Right ventricle myocardium inferior (tissue), 1 donor: ENCODE measurements at regions of chr1 and their contacts with region 1.

Region 1: DNA sequence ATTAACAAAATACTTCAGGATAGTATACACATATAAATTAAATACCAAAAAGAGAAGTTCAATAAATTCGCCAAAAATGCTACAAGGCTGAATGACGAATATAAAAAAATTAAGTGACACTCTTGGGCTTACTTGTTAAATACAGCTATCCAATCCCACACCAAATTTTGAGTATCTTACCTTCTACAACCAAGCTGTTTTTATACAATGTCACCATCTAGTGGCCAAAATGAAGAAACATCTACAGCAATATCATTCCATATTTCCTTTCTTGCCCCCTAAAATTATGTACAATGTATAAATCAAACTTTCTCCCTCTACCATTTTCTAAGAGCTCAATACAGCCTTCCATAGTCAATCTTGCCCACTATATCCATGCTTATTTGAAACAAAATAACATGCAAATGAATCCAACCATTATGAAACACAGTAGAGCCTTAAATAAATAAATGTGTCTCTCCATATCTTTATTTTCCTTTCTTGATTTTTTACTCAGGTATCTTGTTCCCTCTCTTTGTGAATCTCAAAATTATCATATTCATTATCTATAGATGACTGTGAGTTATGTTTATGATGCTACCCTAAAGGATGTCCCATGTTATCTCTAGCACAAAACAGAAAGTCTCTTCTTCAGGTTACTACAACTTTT is 86.3 kb downstream of the ACBD6 start:
- DNase-seq: no peak
- ATAC-seq: no peak

Region 2: GRCh38 chr1:180188091-180188506 is 228.0 kb before region 1 on chr1:
- intact Hi-C with region 1: loop called (anchors 5 kb)
- DNase-seq: no peak
- ATAC-seq: no peak

Region 3: DNA sequence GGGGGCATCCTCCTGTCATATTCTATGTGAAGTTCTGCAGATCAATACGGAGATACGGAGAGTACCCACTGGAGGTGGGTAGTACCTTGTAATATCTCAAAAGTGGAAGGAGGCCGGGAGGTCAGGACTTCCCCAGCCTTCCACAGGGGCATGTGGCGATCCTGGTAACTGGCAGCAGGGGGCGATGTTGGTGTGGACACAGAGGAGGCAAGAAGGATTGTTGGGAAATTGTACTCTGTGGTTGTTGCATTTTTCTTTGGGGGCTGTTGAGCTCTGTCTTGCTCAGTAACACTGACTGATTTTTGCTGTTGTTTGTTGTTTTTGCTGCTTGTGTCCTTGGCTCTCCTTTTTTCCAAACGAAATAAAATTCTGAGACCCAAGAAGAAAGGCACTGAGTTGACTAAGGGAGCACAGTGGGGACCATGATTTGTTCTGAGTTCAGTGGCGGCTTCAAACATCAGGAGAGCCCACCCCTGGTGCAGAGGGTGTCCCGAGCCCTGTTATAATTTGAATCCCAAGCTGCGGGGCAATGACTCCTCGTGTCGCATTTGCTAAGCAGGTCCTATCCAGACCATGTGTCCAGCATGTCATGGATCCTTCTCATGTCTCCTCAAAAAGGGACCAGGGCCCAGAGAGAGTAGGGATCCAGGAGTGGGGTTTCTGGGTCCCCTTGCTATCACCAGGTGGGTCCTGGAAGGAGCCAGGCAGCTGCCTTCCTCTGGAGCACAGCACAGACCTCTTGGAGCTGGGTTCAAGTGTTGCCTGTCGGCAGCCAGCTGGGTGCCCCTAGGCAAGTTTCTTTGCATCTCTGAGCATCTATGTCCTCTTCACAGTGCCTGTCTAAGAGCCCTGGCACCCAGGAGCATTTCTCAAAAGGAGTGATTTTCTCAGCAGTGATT is 163.2 kb before region 1 on chr1:
- intact Hi-C with region 1: loop called (anchors 2 kb)
- DNase-seq: peak; percentile 90
- ATAC-seq: peak; percentile 51

Region 4: DNA sequence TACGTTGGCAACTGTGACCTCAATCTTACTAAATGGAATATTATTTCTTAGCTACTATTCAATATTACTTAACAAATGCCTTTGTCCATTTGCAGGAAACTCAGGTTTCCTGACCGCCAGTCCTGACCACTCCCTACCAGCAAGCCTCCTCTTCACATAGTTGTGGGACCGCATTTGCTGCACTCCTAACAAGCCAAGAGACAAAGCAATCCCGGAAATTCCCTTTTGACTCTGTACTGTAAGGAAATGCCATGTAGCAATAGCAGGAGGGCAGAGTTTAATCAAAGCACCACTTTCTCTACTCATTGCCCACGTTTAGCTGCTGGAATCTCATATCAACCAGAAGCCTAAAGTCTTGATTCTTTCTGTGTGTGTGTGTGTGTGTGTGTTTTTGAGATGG is 114.4 kb after region 1 on chr1:
- intact Hi-C with region 1: no loop called
- DNase-seq: no peak
- ATAC-seq: peak; percentile 29